ENCODE measurements at regions of chr20 and their contacts with region 1.

Region 1: DNA sequence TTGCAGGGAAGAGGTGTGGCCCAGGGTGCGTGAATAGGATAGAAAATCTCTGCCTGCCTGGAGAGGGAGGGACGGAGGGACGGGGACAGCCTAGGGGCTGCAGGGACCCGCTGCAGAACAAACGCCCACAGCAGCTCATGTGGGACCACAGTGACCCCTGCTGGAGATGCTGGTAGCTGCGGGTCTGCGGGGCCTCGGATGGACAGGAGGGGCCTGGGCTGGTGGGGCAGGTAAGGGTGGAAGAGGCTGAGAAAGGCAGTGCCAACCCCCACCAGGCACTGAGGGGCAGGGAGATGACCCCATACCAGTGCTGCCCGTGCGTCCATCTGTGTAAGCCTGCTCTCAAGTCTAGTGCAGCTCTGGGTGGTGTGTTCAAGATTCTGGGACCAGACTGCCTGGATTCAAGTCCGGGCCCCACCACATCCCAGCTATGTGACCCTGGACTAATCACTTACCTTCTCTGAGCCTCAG is 39.4 kb downstream of the KIAA1755 start:
- DNase-seq: peak; percentile 71
- H3K4me3 Mint-ChIP-seq: no peak overlapping the region
- H3K27ac Mint-ChIP-seq: no peak overlapping the region
- H3K4me1 Mint-ChIP-seq: peaks cover 5% of the 10 kb centered on the region
- H3K27me3 Mint-ChIP-seq: peaks cover 3% of the 10 kb centered on the region

Region 2: DNA sequence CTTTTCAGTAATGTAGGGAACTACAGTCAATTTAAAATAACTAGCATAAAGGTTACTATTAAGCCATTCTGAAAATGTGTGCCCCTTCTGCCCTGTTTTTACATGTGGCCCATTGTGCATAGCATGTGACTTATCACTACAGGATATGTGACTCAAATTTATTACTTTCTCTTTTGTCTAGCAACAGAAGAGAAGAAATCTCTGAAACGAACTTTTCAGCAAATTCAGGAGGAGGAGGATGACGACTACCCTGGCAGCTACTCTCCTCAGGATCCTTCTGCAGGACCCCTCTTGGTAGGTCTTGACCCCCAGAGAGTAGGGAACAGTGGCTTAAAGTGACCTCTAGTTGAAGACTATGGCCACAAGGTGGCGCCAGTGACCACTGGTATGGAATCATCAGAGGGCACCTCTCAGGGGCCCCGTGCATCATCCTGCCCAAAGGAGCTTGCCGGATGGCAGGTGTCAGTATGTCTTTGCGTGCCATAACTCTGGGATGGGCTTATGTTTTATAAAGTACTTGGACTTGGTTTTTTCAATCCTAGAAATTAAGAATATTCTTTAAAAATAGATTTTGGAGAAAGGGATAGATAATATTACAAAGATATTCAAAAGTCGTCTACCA is 163.7 kb before region 1 on chr20:
- CTCF ChIA-PET with region 1: interaction called, 64 read pairs
- POLR2A ChIA-PET with region 1: no interaction called
- DNase-seq: peak; percentile 77
- H3K4me3 Mint-ChIP-seq: no peak overlapping the region
- H3K27ac Mint-ChIP-seq: peak overlapping the region; percentile 32
- H3K4me1 Mint-ChIP-seq: peaks cover 26% of the 10 kb centered on the region
- H3K27me3 Mint-ChIP-seq: no peaks in the 10 kb centered on the region

Region 3: DNA sequence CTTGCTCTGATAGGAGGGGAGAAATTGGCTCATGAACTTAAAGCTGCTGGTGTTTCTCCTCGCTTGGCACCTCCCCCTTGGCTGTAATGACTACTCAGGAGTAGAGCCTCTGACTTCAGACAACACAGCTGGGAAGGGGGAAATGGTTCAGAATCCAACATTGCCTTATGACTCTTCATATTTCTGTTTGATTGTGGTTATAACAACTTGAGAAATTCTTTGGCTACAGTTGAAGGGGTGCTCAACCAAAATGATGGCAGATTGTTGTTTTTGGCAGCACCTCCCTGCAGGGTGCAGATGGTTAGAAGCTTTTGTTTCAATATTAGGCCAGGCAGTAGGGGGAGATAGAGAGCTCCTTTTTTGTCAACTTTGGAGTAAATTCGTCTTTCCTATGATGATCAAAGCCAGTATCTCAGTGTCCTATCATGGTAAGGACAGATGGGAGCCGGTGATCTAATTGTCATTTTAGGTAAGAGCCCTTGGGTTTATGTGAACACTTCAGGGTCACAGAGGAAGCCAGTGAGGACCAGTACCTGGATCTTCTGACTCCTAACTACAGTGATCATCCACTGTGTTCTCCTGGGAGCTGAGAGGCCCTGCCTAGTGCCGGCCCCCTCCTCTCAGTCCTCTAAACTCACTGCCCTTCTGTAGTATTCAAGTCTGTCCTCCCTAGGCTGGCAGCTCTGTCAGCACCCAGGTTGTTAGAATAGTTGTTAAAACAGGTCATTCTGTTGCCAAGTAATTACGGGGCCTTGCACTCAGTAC is 147.7 kb before region 1 on chr20:
- CTCF ChIA-PET with region 1: interaction called, 38 read pairs
- POLR2A ChIA-PET with region 1: no interaction called
- DNase-seq: no peak
- H3K4me3 Mint-ChIP-seq: no peak overlapping the region
- H3K27ac Mint-ChIP-seq: no peak overlapping the region
- H3K4me1 Mint-ChIP-seq: no peaks in the 10 kb centered on the region
- H3K27me3 Mint-ChIP-seq: no peaks in the 10 kb centered on the region

Region 4: DNA sequence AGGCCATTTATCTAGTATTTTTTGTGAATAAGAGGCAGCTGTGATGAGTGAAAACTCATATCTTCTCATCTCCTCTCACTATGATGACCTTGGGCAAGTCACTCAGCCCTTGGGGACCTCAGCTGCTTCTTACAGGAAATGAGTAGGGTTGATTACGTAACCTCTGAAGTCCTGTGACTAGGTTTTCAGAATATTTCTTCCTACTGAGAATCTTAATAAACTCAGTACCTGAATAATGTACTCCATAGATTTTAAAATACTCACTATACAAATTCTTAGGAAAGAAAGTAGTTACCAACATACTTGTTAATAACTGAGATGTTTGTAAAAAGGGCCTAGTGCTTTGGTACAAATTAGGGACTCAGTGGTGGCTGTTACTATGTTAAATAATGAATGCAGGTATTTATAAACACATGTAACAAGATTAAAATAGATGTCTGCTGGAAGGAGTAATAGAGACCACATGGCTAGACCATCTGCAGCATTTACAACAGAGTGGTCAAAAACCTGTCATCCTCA is 126.7 kb before region 1 on chr20:
- CTCF ChIA-PET with region 1: interaction called, 14 read pairs
- POLR2A ChIA-PET with region 1: no interaction called
- DNase-seq: peak; percentile 53
- H3K4me3 Mint-ChIP-seq: no peak overlapping the region
- H3K27ac Mint-ChIP-seq: peak overlapping the region; percentile 21
- H3K4me1 Mint-ChIP-seq: peaks cover 41% of the 10 kb centered on the region
- H3K27me3 Mint-ChIP-seq: peaks cover 3% of the 10 kb centered on the region

Region 5: DNA sequence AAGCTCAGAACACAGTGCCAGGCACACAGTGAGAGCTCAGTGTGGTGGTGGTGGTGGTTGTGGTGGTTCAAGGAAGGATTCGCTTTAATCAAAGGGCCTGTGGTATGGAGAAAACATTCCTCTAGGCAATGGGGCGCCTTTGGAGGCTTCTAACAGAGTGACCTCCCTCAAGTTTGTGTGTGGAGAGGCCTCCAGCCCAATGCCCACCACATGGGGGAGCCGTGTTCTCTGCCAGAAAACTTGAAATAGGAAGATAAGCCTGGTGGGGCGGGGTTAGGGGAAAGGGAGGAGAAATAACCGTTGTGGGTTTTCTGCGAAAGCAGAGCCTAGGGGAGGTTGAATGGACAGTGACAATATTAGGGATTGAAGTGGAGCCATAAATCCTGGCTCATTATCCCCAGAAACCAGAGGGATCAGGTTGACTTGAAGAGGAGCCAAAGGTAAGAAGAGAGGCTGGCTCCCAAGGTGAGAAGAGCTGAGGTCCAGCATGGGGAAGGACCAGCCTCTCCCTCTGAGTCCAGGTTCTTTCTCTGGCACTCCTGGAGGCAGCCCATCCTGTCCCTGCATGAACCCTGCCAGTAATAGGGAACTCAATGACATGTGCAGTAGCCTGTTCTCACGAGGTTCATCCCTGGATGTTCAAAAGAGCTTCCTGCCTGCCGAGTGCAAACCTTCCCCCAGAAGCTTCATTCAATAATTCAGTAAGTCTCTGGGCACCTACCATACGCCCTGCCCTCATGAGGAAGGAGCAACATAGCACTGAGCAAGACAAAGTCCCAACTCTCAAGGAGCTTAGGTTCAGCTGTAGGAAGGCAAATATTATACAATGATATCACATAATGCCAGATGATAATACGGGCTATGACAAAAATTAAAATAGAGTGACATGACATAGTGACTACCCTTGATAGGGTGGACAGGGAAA is 107.5 kb before region 1 on chr20:
- CTCF ChIA-PET with region 1: interaction called, 43 read pairs
- POLR2A ChIA-PET with region 1: no interaction called
- DNase-seq: peak; percentile 50
- H3K4me3 Mint-ChIP-seq: no peak overlapping the region
- H3K27ac Mint-ChIP-seq: peak overlapping the region; percentile 25
- H3K4me1 Mint-ChIP-seq: peaks cover 16% of the 10 kb centered on the region
- H3K27me3 Mint-ChIP-seq: peaks cover 18% of the 10 kb centered on the region

Region 6: GRCh38 chr20:38134387-38135270 is 86.5 kb before region 1 on chr20:
- CTCF ChIA-PET with region 1: no interaction called
- POLR2A ChIA-PET with region 1: no interaction called
- DNase-seq: no peak
- H3K4me3 Mint-ChIP-seq: no peak overlapping the region
- H3K27ac Mint-ChIP-seq: no peak overlapping the region
- H3K4me1 Mint-ChIP-seq: peaks cover 12% of the 10 kb centered on the region
- H3K27me3 Mint-ChIP-seq: no peaks in the 10 kb centered on the region

Region 7: DNA sequence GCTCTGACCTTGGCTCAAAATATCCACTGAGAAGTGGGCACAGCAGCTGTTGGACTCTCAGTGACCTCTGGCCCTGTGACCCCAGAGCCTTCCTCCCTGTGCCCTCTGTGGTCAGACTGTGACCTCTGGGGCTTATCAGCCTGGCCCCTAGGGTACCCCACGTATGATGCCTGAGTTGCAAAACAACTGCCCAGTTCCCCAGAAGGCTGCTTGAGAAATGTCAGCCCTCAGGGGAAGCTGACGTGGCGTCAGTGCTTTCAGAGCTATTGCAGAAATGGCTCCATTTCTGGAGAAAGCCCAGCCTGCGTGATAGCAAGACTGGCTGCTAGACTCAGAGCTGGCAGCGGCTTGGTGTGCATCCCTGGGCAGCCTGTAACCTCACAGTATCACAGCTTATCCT is 24.6 kb before region 1 on chr20:
- CTCF ChIA-PET with region 1: interaction called, 15 read pairs
- POLR2A ChIA-PET with region 1: no interaction called
- DNase-seq: no peak
- H3K4me3 Mint-ChIP-seq: no peak overlapping the region
- H3K27ac Mint-ChIP-seq: no peak overlapping the region
- H3K4me1 Mint-ChIP-seq: no peaks in the 10 kb centered on the region
- H3K27me3 Mint-ChIP-seq: peaks cover 4% of the 10 kb centered on the region

Region 8: GRCh38 chr20:38209054-38209675 is 12.0 kb before region 1 on chr20:
- CTCF ChIA-PET with region 1: interaction called, 21 read pairs
- POLR2A ChIA-PET with region 1: no interaction called
- DNase-seq: no peak
- H3K4me3 Mint-ChIP-seq: no peak overlapping the region
- H3K27ac Mint-ChIP-seq: no peak overlapping the region
- H3K4me1 Mint-ChIP-seq: no peaks in the 10 kb centered on the region
- H3K27me3 Mint-ChIP-seq: peaks cover 17% of the 10 kb centered on the region

Measured in activated CD4-positive, alpha-beta memory T cell treated with anti-CD3 and anti-CD28 coated beads, Interleukin-2, amount 10 ng/mL, durations not matched to agents 7 days and 5 days (primary cell).